Posterior cingulate gyrus (tissue), 11 donors: ENCODE measurements at regions of chr6 and their contacts with region 1.

Region 1: GRCh38 chr6:30742316-30743098 is at the start of gene FLOT1:
- DNase-seq: peak; percentile 81 to 98 (median 90)

Region 2: GRCh38 chr6:30769088-30769852 is 26.8 kb after region 1 on chr6:
- intact Hi-C with region 1: no loop called
- DNase-seq: peak in 7 of 10 donors; percentile 17 to 91 (median 38)

Region 3: GRCh38 chr6:30781743-30782424 is 39.4 kb after region 1 on chr6:
- intact Hi-C with region 1: loop called (anchors 5 kb)
- DNase-seq: peak; percentile 78 to 97 (median 86)

Region 4: GRCh38 chr6:30877419-30878371 is 135.2 kb after region 1 on chr6:
- intact Hi-C with region 1: loop called (anchors 5 kb)
- DNase-seq: peak; percentile 74 to 97 (median 89)